ENCODE measurements at regions of chr2 and their contacts with region 1.

Region 1: GRCh38 chr2:20661067-20661980 is 5.6 kb upstream of the GDF7 start:
- DNase-seq: peak; percentile 72
- H3K4me3 Mint-ChIP-seq: no peak overlapping the region
- H3K27ac Mint-ChIP-seq: no peak overlapping the region
- H3K4me1 Mint-ChIP-seq: peaks cover 20% of the 10 kb centered on the region
- H3K27me3 Mint-ChIP-seq: peaks cover 95% of the 10 kb centered on the region
- CTCF ChIP-seq: peak; percentile 92

Region 2: DNA sequence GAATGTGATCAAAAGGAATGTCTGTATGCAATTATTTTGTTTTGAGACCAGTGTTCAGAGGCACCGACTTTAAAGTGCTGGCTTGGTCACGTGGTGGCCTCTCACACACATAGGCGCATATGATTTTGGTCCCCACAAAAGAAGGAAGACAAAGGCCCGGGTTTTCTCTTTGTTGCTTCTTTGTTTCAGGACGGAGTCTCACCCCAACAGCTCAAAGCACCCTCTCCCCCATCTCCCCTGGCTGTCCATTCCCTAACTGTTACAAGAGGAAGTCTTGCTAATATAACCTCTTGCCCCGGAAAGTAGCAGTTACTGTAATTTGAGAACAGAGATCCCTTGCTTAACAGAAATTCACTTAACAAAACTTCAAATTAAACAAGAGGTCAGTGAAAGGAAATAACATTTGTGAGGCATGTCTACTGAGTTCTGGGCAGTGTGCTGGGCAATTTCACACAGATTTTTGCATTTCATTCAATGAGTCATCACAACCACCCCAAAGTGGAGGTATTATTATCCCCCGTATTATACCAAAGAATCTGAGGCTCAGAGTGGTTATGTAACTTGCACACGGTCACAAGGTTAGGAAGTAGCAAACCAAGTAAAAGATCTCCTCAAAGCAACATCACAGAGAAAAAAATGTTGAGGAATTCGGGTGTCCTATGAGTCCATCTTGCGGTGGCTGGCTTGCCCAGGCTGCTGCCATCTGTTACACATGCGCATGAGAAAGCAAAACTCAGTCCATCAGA is 512.2 kb before region 1 on chr2:
- CTCF ChIA-PET with region 1: no interaction called
- intact Hi-C with region 1: no loop called
- DNase-seq: no peak
- H3K4me3 Mint-ChIP-seq: no peak overlapping the region
- H3K27ac Mint-ChIP-seq: peak overlapping the region; percentile 26
- H3K4me1 Mint-ChIP-seq: peaks cover 54% of the 10 kb centered on the region
- H3K27me3 Mint-ChIP-seq: no peaks in the 10 kb centered on the region
- CTCF ChIP-seq: no peak

Region 3: GRCh38 chr2:20584637-20585321 is 76.5 kb before region 1 on chr2:
- CTCF ChIA-PET with region 1: no interaction called
- intact Hi-C with region 1: no loop called
- DNase-seq: peak; percentile 86
- H3K4me3 Mint-ChIP-seq: no peak overlapping the region
- H3K27ac Mint-ChIP-seq: peak overlapping the region; percentile 39
- H3K4me1 Mint-ChIP-seq: peaks cover 30% of the 10 kb centered on the region
- H3K27me3 Mint-ChIP-seq: no peaks in the 10 kb centered on the region
- CTCF ChIP-seq: no peak

Region 4: DNA sequence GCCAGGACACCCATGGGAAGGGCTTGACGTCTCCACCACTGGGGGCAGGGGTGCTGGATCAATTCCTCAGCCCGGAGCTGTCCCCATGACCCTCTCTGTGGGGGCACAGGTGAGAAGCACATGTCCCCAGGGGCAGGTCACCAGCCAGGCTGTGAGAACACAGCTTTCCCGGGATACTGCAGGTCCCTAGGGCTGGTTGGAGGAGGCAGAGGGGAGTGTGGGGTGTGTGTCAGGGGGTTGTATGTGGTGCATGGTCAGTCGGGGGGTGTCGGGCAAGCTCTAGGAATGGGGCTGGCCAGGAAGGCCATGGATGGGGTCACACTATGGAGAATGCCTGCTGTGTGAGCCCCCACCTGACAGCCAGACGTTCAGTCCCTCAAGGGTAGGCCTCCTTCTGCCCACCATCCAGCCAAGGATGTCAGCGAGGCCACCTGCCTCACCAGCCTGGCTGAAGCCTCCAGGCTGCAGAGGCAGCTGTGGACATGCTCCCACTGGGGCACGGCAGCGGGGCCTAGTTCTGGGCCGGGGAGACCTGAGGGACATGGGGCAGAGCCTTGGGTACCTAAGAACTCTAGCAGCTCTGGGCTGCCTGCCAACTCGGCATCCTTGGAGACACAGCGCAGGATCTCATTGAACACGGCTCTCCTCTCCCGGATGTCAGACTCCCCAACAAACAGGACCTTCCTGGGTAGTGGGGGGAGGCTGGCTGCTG is 20.8 kb before region 1 on chr2:
- CTCF ChIA-PET with region 1: no interaction called
- intact Hi-C with region 1: no loop called
- DNase-seq: no peak
- H3K4me3 Mint-ChIP-seq: no peak overlapping the region
- H3K27ac Mint-ChIP-seq: no peak overlapping the region
- H3K4me1 Mint-ChIP-seq: peaks cover 18% of the 10 kb centered on the region
- H3K27me3 Mint-ChIP-seq: no peaks in the 10 kb centered on the region
- CTCF ChIP-seq: no peak

Region 5: DNA sequence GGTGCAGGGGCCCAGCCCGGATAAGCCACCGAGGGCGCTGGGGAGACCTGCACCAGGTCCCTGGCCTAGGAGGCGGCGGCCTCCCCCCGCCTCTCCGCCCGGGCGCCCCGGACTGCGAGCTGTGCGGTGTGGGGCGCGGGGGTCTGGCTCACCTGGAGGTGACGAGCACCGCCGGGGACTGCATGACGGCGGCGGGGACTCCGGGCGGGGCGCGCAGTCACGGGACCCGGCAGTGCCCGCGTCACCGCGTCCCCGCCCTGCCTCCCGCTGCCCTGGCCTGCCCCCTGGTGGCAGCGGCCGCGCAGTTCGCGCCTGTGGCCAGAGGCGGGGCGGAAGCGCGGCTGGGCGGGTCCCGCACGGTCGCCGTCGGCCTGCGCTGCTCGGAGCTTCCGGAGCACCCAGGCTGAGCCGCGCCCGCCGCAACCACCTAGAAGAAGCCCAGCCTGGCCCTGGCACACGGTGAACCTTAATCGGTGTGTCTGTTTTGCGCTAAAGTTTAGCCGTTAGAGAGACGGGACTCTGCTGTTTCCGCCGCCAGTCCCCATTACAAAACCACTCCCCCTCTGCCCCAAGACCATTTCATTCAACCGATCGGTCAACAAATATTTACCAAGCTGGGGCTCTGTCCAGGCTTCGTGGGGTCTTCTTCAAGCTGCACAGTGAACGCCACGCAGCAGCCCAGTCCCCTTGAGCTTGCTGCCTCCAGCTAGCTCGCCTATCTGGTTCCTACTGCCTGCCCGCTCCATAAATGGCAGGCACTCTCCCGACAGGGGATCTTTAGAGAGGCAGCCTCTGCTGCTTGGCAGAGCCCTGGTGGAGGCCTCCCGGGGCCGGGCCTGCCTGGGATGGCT is 10.2 kb before region 1 on chr2 and contains the start of gene HS1BP3:
- CTCF ChIA-PET with region 1: interaction called, 12 read pairs
- intact Hi-C with region 1: no loop called
- DNase-seq: peak; percentile 94
- H3K4me3 Mint-ChIP-seq: peak within 1 kb of the TSS; percentile 82
- H3K27ac Mint-ChIP-seq: peak within 1 kb of the TSS; percentile 71
- H3K4me1 Mint-ChIP-seq: peaks cover 23% of the 10 kb centered on the region
- H3K27me3 Mint-ChIP-seq: peaks cover 21% of the 10 kb centered on the region
- CTCF ChIP-seq: peak; percentile 88
- total RNA-seq, gene HS1BP3: 26.4 and 28.5 TPM in 2 replicates

Region 6: DNA sequence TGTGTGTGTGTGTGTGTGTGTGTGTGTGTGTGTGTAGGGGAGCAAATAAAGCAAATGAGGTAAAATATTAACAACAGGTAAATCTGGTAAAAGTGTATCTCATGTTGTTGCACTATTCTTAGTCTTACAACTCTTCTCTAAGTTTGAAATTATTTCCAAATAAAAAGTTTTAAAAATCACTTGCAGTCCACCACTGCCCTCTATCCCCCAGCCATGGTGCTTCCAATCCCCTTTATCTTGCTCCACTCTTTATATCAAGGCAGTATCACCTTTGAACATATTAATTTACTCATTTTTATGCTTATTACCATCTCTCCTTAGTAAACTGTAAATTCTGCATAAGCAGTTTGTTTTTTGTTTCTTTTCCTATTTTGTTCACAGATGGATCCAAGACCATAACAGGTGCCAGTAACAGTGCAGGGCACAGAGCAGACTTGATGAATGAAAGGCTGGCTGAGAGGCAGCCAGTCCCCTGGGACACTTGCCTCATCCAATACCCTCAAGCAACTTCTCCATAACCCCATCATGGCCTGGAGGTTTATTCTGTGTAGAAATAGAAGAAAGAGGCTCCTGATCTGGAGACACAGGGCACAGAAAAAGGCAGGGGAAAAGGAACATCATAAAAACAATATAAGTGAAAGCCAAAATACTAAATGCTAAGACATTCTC is 93.9 kb after region 1 on chr2:
- CTCF ChIA-PET with region 1: no interaction called
- intact Hi-C with region 1: loop called (anchors 5 kb)
- DNase-seq: no peak
- H3K4me3 Mint-ChIP-seq: no peak overlapping the region
- H3K27ac Mint-ChIP-seq: no peak overlapping the region
- H3K4me1 Mint-ChIP-seq: no peaks in the 10 kb centered on the region
- H3K27me3 Mint-ChIP-seq: no peaks in the 10 kb centered on the region
- CTCF ChIP-seq: no peak

Region 7: DNA sequence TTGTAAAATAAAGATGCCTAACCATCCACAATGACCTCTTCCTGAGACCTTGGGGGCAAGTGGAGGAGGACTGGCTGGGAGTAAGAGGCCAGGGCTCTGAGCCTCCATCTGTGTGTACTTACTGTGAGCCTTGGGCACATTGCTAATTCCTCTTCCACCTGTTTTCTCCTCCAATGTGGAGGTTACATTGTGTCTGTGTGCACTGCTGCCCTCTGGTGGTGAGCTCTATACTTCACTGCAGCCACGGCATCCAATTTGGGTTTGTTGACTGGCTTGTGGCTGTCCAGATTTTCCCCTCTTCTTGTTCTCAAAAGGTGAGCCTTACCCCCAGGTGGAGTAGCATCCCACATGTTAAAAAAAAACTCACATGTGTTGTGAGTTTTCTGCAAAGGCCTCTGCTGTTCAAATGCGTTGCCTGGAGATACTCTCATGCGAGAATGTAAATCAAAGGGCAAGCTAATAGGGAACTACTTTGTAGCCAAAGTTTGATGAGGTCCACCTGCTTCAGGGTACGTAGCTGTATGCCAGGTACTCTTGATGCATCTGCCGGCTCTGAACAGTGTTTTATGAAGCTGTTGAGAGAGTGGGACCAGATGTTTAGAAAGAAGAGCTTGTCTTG is 301.7 kb after region 1 on chr2:
- CTCF ChIA-PET with region 1: interaction called, 38 read pairs
- intact Hi-C with region 1: loop called (anchors 1 kb)
- DNase-seq: peak; percentile 76
- H3K4me3 Mint-ChIP-seq: no peak overlapping the region
- H3K27ac Mint-ChIP-seq: no peak overlapping the region
- H3K4me1 Mint-ChIP-seq: no peaks in the 10 kb centered on the region
- H3K27me3 Mint-ChIP-seq: peaks cover 85% of the 10 kb centered on the region
- CTCF ChIP-seq: peak; percentile 77

Region 8: GRCh38 chr2:21118302-21118920 is 457.1 kb after region 1 on chr2:
- CTCF ChIA-PET with region 1: no interaction called
- intact Hi-C with region 1: loop called (anchors 1 kb)
- DNase-seq: no peak
- H3K4me3 Mint-ChIP-seq: no peak overlapping the region
- H3K27ac Mint-ChIP-seq: no peak overlapping the region
- H3K4me1 Mint-ChIP-seq: no peaks in the 10 kb centered on the region
- H3K27me3 Mint-ChIP-seq: peaks cover 36% of the 10 kb centered on the region
- CTCF ChIP-seq: peak; percentile 29